Adrenal gland (tissue), 19 donors: ENCODE measurements at regions of chr15 and their contacts with region 1.

Region 1: GRCh38 chr15:31245135-31245689 is 81.4 kb upstream of the KLF13 start:
- DNase-seq: no peak
- H3K4me3 ChIP-seq: no peak overlapping the region
- H3K27ac ChIP-seq: no peak overlapping the region
- H3K4me1 ChIP-seq: no peaks in the 10 kb centered on the region
- H3K27me3 ChIP-seq: no peaks in the 10 kb centered on the region
- CTCF ChIP-seq: no peak
- POLR2A ChIP-seq: no peak

Region 2: DNA sequence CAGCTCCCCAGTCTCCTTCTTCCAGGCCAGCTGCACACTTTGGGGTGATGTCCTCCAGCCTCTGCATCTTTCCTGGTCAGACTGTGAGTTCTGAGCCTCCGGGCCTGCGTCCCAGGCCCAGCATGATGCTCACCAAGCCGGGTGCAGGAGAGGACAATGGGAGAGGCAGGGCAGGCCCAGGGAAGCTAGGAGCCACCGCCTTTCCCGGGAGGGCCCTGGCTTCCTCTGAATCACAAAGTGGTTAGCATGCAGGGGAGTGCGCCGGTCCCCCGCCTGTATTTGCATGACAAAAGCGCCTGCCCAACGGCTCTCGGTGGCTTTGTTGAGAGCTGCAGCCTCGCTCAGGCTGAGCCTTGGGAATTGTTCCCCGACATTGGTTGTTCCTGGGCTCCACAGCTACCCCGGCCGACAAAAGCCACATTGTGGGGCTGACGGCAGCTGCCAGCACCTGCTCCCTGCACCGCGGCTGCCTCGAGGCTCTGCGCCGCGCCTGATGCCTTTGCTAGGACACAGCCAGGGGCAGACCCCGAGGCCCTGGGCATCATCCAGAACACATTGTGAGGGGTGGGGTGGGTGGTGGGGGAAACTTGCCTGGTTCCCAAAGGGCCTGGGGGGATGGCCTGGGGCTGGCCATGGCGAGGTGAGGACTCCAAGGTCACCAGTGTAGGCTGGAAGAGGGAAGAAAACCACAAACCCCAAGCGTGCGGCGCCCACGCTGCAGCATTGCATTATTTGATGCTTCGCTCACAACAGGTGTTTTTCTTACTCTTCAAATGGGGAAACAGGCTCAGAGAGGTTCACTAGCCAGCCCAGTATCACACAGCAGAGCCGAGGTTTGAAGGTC is 61.4 kb after region 1 on chr15:
- intact Hi-C with region 1: loop called in 1 of 2 experiments (anchors 5 kb)
- DNase-seq: peak in 2 of 7 donors; percentile 32 to 51
- H3K4me3 ChIP-seq: no peak overlapping the region
- H3K27ac ChIP-seq: no peak overlapping the region
- H3K4me1 ChIP-seq: peaks cover 0 to 12% of the 10 kb centered on the region in 2 donors
- H3K27me3 ChIP-seq: no peaks in the 10 kb centered on the region
- CTCF ChIP-seq: no peak
- POLR2A ChIP-seq: no peak